Activated B cell treated with CpG ODN at 0.5 μM for 24 hours (primary cell): ENCODE measurements at regions of chr5 and their contacts with region 1.

Region 1: GRCh38 chr5:124902097-124902821 is 155.8 kb upstream of the ZNF608 start:
- DNase-seq: peak; percentile 37
- ATAC-seq: peak; percentile 98
- H3K4me3 Mint-ChIP-seq: peak overlapping the region; percentile 72
- H3K27ac Mint-ChIP-seq: peak overlapping the region; percentile 88
- H3K4me1 Mint-ChIP-seq: peaks cover 40% of the 10 kb centered on the region
- H3K27me3 Mint-ChIP-seq: no peaks in the 10 kb centered on the region
- CTCF ChIP-seq: no peak

Region 2: DNA sequence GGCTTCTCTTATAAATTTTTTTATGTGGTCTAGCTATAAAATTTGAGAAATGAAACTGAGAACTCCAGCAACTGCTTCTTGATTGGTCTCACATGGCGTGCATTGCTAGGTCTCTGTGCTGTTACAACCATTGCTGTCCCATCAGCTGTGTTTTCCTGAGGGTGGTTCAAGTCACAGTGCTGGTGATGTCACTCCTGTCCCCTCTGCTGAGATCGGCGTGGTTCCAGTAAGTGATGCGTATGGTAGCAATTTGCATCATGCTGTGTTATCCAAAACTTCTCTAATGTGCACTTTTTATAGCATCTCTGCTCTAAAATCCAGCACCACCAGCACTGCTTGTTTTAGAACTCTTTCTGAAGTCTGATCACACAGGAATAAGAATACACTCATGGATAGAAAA is 43.2 kb before region 1 on chr5:
- CTCF ChIA-PET with region 1: no interaction called
- POLR2A ChIA-PET with region 1: interaction called, 11 read pairs
- intact Hi-C with region 1: no loop called
- DNase-seq: peak; percentile 26
- ATAC-seq: peak; percentile 95
- H3K4me3 Mint-ChIP-seq: no peak overlapping the region
- H3K27ac Mint-ChIP-seq: peak overlapping the region; percentile 46
- H3K4me1 Mint-ChIP-seq: peaks cover 17% of the 10 kb centered on the region
- H3K27me3 Mint-ChIP-seq: no peaks in the 10 kb centered on the region
- CTCF ChIP-seq: no peak

Region 3: GRCh38 chr5:124920909-124921666 is 18.8 kb after region 1 on chr5:
- CTCF ChIA-PET with region 1: no interaction called
- POLR2A ChIA-PET with region 1: interaction called, 15 read pairs
- intact Hi-C with region 1: loop called (anchors 1 kb)
- DNase-seq: no peak
- ATAC-seq: peak; percentile 83
- H3K4me3 Mint-ChIP-seq: no peak overlapping the region
- H3K27ac Mint-ChIP-seq: no peak overlapping the region
- H3K4me1 Mint-ChIP-seq: peaks cover 10% of the 10 kb centered on the region
- H3K27me3 Mint-ChIP-seq: no peaks in the 10 kb centered on the region
- CTCF ChIP-seq: no peak

Region 4: GRCh38 chr5:124952079-124952478 is 49.8 kb after region 1 on chr5:
- CTCF ChIA-PET with region 1: no interaction called
- POLR2A ChIA-PET with region 1: no interaction called
- intact Hi-C with region 1: loop called (anchors 1 kb)
- DNase-seq: peak; percentile 25
- ATAC-seq: peak; percentile 82
- H3K4me3 Mint-ChIP-seq: no peak overlapping the region
- H3K27ac Mint-ChIP-seq: peak overlapping the region; percentile 78
- H3K4me1 Mint-ChIP-seq: peaks cover 21% of the 10 kb centered on the region
- H3K27me3 Mint-ChIP-seq: no peaks in the 10 kb centered on the region
- CTCF ChIP-seq: no peak

Region 5: DNA sequence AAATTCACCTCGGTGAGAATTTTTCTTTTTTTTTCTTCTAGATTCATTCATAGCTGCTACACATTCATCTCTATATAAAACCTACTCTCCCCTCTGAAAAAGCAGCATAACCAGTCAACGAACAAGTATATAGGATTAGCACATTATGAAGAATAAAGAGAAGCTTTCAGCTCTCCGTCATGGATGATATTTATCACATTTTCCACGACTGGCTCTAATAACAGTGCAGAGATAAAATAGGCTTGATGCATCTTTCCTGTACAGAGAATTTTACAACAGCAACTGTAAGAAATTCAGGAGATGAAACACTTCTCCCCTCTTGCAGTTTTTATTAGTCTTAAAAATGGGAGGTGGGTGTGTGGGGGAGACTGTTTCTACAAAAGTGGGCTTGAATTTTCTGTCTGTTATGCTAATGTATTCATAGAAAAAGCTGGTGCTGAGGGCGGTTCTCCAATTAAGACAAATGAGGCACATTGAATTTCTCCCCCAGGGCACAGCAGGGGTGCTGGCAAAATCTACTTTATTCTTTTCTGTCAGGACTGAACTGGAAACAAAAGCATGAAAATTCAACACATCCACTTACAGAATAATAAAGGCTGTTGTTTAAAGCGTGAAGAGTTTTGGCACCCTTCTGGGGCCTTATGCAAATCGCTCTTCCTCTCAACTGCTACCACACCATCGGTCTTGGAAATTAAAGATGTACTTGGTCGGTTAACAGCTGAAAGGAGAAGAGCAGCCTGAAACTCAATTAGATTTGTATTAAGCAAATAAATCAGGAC is 78.1 kb after region 1 on chr5:
- CTCF ChIA-PET with region 1: no interaction called
- POLR2A ChIA-PET with region 1: no interaction called
- intact Hi-C with region 1: loop called (anchors 5 kb)
- DNase-seq: no peak
- ATAC-seq: peak; percentile 90
- H3K4me3 Mint-ChIP-seq: peak overlapping the region; percentile 59
- H3K27ac Mint-ChIP-seq: peak overlapping the region; percentile 62
- H3K4me1 Mint-ChIP-seq: peaks cover 60% of the 10 kb centered on the region
- H3K27me3 Mint-ChIP-seq: no peaks in the 10 kb centered on the region
- CTCF ChIP-seq: no peak